ENCODE measurements at regions of chr6 and their contacts with region 1.

Region 1: DNA sequence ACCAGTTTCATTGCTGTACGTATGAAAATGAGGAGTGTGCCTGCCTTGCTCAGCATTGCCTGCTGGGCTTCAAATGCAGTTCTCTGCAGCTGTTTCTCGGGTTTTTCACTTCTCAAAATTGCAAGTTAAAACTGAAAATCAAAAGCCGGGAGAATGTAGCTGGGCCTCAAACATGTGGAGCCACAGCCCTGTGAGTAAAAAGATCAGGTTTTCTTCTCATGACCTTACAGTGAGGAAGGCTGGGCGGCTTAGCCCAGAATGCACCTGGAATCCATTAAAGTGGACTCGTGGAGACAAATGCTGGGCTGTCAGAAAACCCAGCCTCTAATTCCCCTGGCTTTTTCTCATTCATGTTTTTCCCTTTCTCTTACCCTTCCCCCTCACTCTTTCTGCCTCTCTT is 34.4 kb downstream of the DSE start:
- DNase-seq: no peak
- ATAC-seq: no peak
- H3K4me3 ChIP-seq: no peak overlapping the region
- H3K4me3 Mint-ChIP-seq: no peak overlapping the region
- H3K27ac ChIP-seq: no peak overlapping the region
- H3K27ac Mint-ChIP-seq: no peak overlapping the region
- H3K4me1 ChIP-seq: no peaks in the 10 kb centered on the region
- H3K4me1 Mint-ChIP-seq: no peaks in the 10 kb centered on the region
- H3K27me3 ChIP-seq: no peaks in the 10 kb centered on the region
- H3K27me3 Mint-ChIP-seq: no peaks in the 10 kb centered on the region
- CTCF ChIP-seq: no peak

Region 2: DNA sequence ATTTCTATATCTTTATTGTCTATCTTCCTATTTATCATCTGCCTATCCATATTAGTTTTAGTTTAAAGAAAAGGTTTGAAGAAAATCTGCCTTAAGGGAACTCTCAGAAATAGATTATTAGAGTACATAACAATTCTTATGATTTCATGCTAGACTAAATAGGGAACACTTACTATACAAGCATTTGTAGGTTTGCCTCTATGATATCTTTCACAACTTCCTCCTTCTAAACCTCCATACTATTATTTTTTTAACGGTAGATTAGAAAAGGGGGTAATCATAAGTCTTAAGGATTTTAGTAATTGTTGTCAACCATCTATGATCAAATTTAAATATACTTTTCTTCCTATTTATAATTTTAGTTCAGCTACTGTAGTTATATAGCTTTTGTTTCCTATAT is 46.0 kb before region 1 on chr6:
- CTCF ChIA-PET with region 1: no interaction called
- POLR2A ChIA-PET with region 1: no interaction called
- intact Hi-C with region 1: loop called in 1 of 2 experiments (anchors 5 kb)
- DNase-seq: no peak
- ATAC-seq: no peak
- H3K4me3 ChIP-seq: no peak overlapping the region
- H3K4me3 Mint-ChIP-seq: no peak overlapping the region
- H3K27ac ChIP-seq: no peak overlapping the region
- H3K27ac Mint-ChIP-seq: no peak overlapping the region
- H3K4me1 ChIP-seq: no peaks in the 10 kb centered on the region
- H3K4me1 Mint-ChIP-seq: no peaks in the 10 kb centered on the region
- H3K27me3 ChIP-seq: no peaks in the 10 kb centered on the region
- H3K27me3 Mint-ChIP-seq: no peaks in the 10 kb centered on the region
- CTCF ChIP-seq: no peak

Region 3: GRCh38 chr6:116420341-116420740 is 15.2 kb after region 1 on chr6:
- CTCF ChIA-PET with region 1: no interaction called
- POLR2A ChIA-PET with region 1: no interaction called
- intact Hi-C with region 1: loop called in 1 of 2 experiments (anchors 2 kb)
- DNase-seq: no peak
- ATAC-seq: no peak
- H3K4me3 ChIP-seq: no peak overlapping the region
- H3K4me3 Mint-ChIP-seq: no peak overlapping the region
- H3K27ac ChIP-seq: no peak overlapping the region
- H3K27ac Mint-ChIP-seq: no peak overlapping the region
- H3K4me1 ChIP-seq: no peaks in the 10 kb centered on the region
- H3K4me1 Mint-ChIP-seq: no peaks in the 10 kb centered on the region
- H3K27me3 ChIP-seq: no peaks in the 10 kb centered on the region
- H3K27me3 Mint-ChIP-seq: no peaks in the 10 kb centered on the region
- CTCF ChIP-seq: no peak